GM12878 (cell line): ENCODE measurements at regions of chr6 and their contacts with region 1.

Region 1: GRCh38 chr6:48048451-48049129 is 62.4 kb downstream of the PTCHD4 start:
- DNase-seq: no peak
- ATAC-seq: no peak
- H3K4me3 ChIP-seq: no peak overlapping the region
- H3K27ac ChIP-seq: no peak overlapping the region
- H3K4me1 ChIP-seq: no peaks in the 10 kb centered on the region
- H3K27me3 ChIP-seq: no peaks in the 10 kb centered on the region
- CTCF ChIP-seq: no peak
- EP300 ChIP-seq: no peak
- POLR2A ChIP-seq: no peak
- RAD21 ChIP-seq: no peak

Region 2: GRCh38 chr6:48061265-48062025 is 12.9 kb after region 1 on chr6:
- CTCF ChIA-PET with region 1: no interaction called
- POLR2A ChIA-PET with region 1: no interaction called
- RAD21 ChIA-PET with region 1: no interaction called
- SMC1A ChIA-PET with region 1: no interaction called
- in situ Hi-C with region 1: no loop called
- intact Hi-C with region 1: loop called (anchors 1 kb)
- DNase-seq: no peak
- ATAC-seq: no peak
- H3K4me3 ChIP-seq: no peak overlapping the region
- H3K27ac ChIP-seq: no peak overlapping the region
- H3K4me1 ChIP-seq: no peaks in the 10 kb centered on the region
- H3K27me3 ChIP-seq: no peaks in the 10 kb centered on the region
- CTCF ChIP-seq: no peak
- EP300 ChIP-seq: no peak
- POLR2A ChIP-seq: no peak
- RAD21 ChIP-seq: no peak

Region 3: DNA sequence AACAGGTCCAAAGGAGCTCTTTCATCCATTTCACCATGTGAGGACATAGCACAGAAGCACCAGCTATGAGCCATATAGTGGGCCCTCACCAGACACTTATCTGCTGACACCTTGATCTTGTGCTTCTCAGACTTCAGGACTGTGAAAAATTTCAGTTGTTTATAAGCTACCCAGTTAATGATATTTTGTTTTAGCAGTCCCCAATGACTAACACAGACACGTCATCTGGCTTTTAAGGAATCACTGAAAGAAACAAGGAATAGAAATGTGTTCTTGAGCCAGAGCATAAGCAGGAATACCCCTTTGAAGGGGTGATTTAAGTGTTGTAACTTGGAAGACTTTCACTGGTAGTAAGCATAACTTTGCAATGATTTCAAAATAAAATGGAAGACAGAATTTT is 277.1 kb after region 1 on chr6:
- CTCF ChIA-PET with region 1: no interaction called
- POLR2A ChIA-PET with region 1: no interaction called
- RAD21 ChIA-PET with region 1: no interaction called
- SMC1A ChIA-PET with region 1: no interaction called
- in situ Hi-C with region 1: no loop called
- intact Hi-C with region 1: no loop called
- DNase-seq: no peak
- ATAC-seq: no peak
- H3K4me3 ChIP-seq: no peak overlapping the region
- H3K27ac ChIP-seq: no peak overlapping the region
- H3K4me1 ChIP-seq: no peaks in the 10 kb centered on the region
- H3K27me3 ChIP-seq: no peaks in the 10 kb centered on the region
- CTCF ChIP-seq: no peak
- EP300 ChIP-seq: no peak
- POLR2A ChIP-seq: no peak
- RAD21 ChIP-seq: no peak